CD4-positive, alpha-beta memory T cell (primary cell): ENCODE measurements at regions of chr4 and their contacts with region 1.

Region 1: DNA sequence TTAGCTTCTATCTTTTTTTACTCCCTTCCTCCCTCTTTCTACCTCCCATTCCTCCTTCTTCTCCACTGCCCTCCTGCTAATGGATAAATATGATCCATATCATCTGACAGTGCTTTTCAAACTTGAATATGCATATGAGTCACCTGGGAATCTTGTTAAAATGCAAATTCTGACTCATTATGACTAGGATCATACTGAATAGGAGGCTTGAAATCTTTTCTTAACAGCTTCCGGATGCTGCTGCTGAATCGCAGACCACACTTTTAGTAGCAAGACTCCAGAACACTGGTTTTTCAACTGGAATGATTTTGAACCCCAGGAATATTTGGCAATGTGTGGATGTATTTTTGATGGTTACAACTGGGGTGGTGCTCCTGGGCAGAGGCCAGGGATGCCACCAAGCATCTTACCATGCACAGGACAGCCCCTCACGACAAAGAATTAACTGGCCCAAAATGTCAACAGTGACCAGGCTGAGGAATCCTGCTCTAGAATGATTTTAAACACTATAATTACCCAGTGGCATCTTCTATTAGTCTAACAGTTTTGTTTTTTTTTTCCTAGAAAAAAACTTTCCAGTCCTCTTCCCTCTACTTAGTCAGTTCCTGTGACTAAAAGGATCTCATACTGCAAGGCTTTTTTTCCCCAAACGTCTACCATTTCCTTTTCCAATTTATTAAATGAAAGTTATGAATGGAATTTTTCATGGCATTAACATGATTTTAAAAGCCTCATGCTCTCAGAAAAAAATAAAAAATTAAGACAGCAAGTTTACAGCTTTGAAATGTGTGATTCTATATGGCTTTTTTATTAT is 10.6 kb upstream of the PYURF start:
- DNase-seq: no peak
- H3K4me3 ChIP-seq: no peak overlapping the region
- H3K4me3 Mint-ChIP-seq: no peak overlapping the region
- H3K27ac ChIP-seq: no peak overlapping the region
- H3K27ac Mint-ChIP-seq: no peak overlapping the region
- H3K4me1 ChIP-seq: peaks cover 3% of the 10 kb centered on the region
- H3K4me1 Mint-ChIP-seq: peaks cover 0 to under 1% (median 0%) of the 10 kb centered on the region in 4 donors
- H3K27me3 ChIP-seq: no peaks in the 10 kb centered on the region
- H3K27me3 Mint-ChIP-seq: no peaks in the 10 kb centered on the region

Region 2: DNA sequence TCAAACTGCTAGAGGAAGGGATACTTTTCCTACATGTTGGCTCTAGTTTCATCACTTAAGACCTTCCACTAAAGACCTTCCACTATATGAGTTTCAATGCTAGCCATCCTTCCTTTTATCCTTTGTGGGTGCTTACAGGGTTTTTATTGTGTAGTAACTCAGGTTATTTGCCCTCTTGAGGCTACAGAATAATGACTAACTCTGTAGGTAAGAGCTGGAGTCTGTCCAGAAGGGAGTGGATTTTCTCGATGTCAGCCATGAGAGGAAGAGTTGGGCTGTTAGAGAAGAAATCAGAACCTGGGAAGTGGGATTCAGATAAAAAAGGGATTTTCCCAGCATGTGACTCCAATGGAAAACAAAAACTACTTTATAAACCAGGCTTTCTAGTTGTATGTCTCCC is 104.7 kb before region 1 on chr4:
- CTCF ChIA-PET with region 1: no interaction called
- POLR2A ChIA-PET with region 1: no interaction called
- intact Hi-C with region 1: no loop called
- DNase-seq: no peak
- H3K4me3 ChIP-seq: no peak overlapping the region
- H3K4me3 Mint-ChIP-seq: no peak overlapping the region
- H3K27ac ChIP-seq: no peak overlapping the region
- H3K27ac Mint-ChIP-seq: peak overlapping the region in 2 of 7 donors; percentile 14 to 76
- H3K4me1 ChIP-seq: no peaks in the 10 kb centered on the region
- H3K4me1 Mint-ChIP-seq: peaks cover 0 to 4% (median 0%) of the 10 kb centered on the region in 4 donors
- H3K27me3 ChIP-seq: no peaks in the 10 kb centered on the region
- H3K27me3 Mint-ChIP-seq: no peaks in the 10 kb centered on the region

Region 3: DNA sequence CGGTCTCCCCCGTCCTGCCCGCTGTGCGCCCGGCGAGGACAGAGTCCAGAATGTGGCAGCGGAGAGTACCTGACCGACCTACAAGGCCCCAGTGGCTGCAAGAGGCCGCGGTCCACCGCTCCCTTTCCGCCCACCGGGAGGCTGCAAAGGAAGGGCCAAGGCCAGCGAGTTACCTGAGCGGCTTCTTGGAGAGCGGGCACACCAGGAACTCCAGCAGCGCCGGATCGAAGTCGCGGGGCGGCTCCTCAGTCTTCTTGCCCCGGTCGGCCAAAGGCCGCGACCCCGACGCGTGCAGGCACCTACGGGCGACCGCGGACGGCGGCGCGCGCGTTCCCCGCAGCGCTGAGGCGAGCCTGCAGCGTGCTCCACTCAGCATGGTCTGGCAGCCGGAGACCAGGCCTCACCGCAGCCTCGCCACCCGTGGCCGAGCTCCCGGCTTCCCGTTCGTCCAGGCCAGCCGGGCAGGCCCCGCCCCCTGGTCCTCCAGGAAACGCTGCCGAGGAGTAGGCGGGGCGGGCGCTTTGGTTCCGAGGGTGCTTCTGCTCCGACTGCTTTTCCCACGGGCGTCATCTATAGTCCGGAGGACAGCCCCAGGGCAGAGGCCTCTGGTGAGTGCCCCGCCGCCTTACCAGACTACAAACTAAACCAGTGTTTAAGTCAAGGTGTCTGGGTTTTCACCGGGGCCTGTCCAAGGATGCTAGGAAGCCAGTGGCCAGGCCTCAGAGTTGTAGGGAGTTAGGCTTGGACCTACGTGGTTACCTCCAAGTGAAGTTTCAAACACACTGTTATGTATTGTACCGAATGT is 10.6 kb before region 1 on chr4 and contains the start of gene PYURF:
- CTCF ChIA-PET with region 1: interaction called, 84 read pairs
- POLR2A ChIA-PET with region 1: no interaction called
- intact Hi-C with region 1: no loop called
- DNase-seq: peak; percentile 60 to 73 (median 64)
- H3K4me3 ChIP-seq: peak within 1 kb of the TSS; percentile 62 to 69
- H3K4me3 Mint-ChIP-seq: peak within 1 kb of the TSS; percentile 91 to 97 (median 94)
- H3K27ac ChIP-seq: peak within 1 kb of the TSS; percentile 60
- H3K27ac Mint-ChIP-seq: peak within 1 kb of the TSS; percentile 89 to 96 (median 93)
- H3K4me1 ChIP-seq: peaks cover 17% of the 10 kb centered on the region
- H3K4me1 Mint-ChIP-seq: peaks cover 22 to 46% (median 32%) of the 10 kb centered on the region in 4 donors
- H3K27me3 ChIP-seq: no peaks in the 10 kb centered on the region
- H3K27me3 Mint-ChIP-seq: no peaks in the 10 kb centered on the region
- total RNA-seq, gene PYURF: 54.5 to 60.4 TPM

Region 4: DNA sequence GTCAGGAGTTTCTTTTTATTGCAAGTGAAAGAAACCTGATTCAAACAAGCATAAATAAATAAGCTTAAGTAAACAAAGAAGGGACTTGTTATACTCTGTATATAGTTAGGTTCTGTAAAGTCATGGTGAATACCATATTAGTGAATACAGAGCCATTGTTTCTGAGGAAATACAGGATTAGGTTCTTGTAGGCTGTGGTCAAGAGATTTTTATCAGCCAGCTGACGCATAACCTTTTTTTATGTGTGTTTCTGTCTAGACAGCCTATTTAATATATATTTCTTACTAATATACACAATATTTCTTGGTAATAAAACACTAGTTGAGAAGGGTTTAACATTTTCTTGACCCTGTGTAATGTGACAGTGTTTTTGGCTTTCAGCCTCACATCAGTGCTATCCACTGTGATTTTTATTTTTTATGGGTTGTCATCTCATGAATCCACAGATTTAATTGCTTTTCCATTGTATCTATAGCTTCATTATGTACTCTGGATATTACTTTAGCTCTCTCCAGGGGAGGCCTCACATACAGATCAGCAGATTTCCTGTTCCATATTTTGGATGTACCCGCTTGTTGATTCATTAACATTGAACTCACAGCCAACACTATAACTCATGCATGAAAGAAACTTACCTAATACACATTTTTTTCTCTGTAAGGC is 66.2 kb after region 1 on chr4:
- CTCF ChIA-PET with region 1: interaction called, 12 read pairs
- POLR2A ChIA-PET with region 1: no interaction called
- intact Hi-C with region 1: no loop called
- DNase-seq: no peak
- H3K4me3 ChIP-seq: no peak overlapping the region
- H3K4me3 Mint-ChIP-seq: peak overlapping the region in 5 of 8 donors; percentile 18 to 63 (median 22)
- H3K27ac ChIP-seq: no peak overlapping the region
- H3K27ac Mint-ChIP-seq: peak overlapping the region; percentile 24 to 78 (median 61)
- H3K4me1 ChIP-seq: peaks cover 70% of the 10 kb centered on the region
- H3K4me1 Mint-ChIP-seq: peaks cover 53 to 82% (median 70%) of the 10 kb centered on the region in 4 donors
- H3K27me3 ChIP-seq: no peaks in the 10 kb centered on the region
- H3K27me3 Mint-ChIP-seq: no peaks in the 10 kb centered on the region

Region 5: DNA sequence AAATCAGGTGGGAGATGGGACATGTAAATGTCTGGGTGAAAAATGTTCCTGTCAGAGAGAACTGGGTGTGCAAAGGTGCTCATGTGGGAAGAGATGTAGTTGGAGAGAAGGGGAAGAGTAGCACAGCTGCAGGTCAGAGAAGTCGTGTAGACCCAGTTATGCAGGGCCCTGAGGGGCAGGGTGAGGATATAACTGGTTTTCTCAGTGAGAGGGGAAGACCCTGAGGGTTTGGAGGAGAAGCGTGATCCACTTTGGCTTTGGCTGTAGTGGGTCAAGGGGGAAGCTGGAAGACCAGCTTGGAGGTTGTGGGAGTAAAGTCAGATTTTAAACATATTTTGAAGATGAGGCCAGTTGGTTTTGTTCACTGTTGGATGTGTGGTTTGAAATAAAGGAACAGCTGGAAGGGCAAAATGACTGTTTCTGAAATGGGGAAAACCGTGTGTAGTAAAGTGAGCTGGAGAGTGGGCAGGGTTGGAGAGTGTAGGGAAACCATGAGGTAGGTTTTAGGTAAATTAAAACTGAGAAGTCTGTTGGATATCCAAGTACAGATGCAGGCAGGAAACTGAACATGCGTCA is 119.3 kb after region 1 on chr4:
- CTCF ChIA-PET with region 1: interaction called, 26 read pairs
- POLR2A ChIA-PET with region 1: no interaction called
- intact Hi-C with region 1: no loop called
- DNase-seq: no peak
- H3K4me3 ChIP-seq: no peak overlapping the region
- H3K4me3 Mint-ChIP-seq: no peak overlapping the region
- H3K27ac ChIP-seq: no peak overlapping the region
- H3K27ac Mint-ChIP-seq: peak overlapping the region; percentile 12 to 87 (median 70)
- H3K4me1 ChIP-seq: peaks cover 5% of the 10 kb centered on the region
- H3K4me1 Mint-ChIP-seq: peaks cover 29 to 41% (median 35%) of the 10 kb centered on the region in 4 donors
- H3K27me3 ChIP-seq: no peaks in the 10 kb centered on the region
- H3K27me3 Mint-ChIP-seq: no peaks in the 10 kb centered on the region

Region 6: DNA sequence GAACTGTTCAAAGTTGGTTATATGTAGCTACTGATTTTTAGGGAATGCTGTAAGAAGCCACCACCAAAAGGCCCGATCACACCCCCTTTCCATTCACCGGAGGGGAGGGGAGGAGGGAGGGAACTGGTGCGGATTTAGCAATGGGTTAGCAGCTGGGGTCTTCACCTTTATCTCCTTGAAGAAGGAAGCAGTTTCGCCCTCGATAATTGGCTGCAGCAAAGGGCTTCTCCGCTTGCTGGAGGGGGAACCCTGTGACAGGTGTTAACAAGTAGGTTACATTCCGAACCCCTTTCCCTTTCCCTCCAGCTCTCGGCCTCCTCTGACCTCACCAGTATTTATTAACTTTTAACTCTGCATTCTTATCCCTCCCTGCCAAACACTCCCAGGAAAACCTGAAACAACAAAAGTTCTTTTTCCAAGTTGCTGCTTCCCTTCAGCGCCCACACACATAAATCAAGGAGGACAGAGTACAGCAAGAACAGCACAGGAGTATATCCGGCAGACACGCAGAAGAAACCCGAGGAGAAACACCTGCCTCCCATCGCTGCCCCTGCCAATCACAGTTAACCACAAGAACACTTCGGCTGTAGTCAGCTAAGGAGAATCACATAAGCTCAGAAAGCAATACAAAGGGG is 203.3 kb after region 1 on chr4:
- CTCF ChIA-PET with region 1: interaction called, 10 read pairs
- POLR2A ChIA-PET with region 1: no interaction called
- intact Hi-C with region 1: no loop called
- DNase-seq: peak in 4 of 5 donors; percentile 10 to 30 (median 22)
- H3K4me3 ChIP-seq: no peak overlapping the region
- H3K4me3 Mint-ChIP-seq: peak overlapping the region in 7 of 8 donors; percentile 31 to 64 (median 46)
- H3K27ac ChIP-seq: no peak overlapping the region
- H3K27ac Mint-ChIP-seq: peak overlapping the region; percentile 20 to 65 (median 36)
- H3K4me1 ChIP-seq: peaks cover 6% of the 10 kb centered on the region
- H3K4me1 Mint-ChIP-seq: peaks cover 13 to 32% (median 22%) of the 10 kb centered on the region in 4 donors
- H3K27me3 ChIP-seq: no peaks in the 10 kb centered on the region
- H3K27me3 Mint-ChIP-seq: no peaks in the 10 kb centered on the region

Region 7: DNA sequence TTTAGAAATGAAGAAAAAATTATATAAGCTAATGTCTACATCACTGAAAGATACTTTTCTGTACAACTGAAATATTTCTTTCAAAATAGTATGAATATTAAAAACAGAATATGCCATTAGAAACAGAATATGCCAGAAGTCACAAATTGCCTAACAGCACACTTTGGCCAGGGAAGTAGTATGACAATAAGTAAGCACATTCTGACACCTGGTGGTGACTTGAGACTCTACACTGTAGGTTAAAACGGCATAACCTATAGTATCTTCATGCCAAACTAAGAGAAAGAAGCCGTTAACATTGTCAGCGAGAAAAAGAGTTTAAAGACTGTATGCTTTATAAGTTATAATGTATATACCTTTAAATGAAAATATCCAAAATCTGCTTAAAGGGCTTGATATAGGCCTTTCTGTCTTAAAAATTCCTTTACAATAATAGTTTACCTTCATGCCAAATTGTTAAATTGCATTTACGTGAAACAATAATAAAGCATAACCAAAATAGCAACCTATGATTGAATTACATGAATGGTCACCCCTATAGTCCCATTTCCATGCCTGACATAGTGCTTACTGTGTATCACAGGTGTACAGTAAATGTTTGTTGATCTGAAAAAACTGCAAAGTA is 490.0 kb after region 1 on chr4:
- CTCF ChIA-PET with region 1: interaction called, 76 read pairs
- POLR2A ChIA-PET with region 1: no interaction called
- intact Hi-C with region 1: loop called (anchors 1 kb)
- DNase-seq: peak; percentile 69 to 75 (median 73)
- H3K4me3 ChIP-seq: no peak overlapping the region
- H3K4me3 Mint-ChIP-seq: no peak overlapping the region
- H3K27ac ChIP-seq: no peak overlapping the region
- H3K27ac Mint-ChIP-seq: peak overlapping the region in 1 of 7 donors; percentile 39
- H3K4me1 ChIP-seq: no peaks in the 10 kb centered on the region
- H3K4me1 Mint-ChIP-seq: peaks cover 0 to 7% (median under 1%) of the 10 kb centered on the region in 4 donors
- H3K27me3 ChIP-seq: no peaks in the 10 kb centered on the region
- H3K27me3 Mint-ChIP-seq: no peaks in the 10 kb centered on the region